CD14-positive monocyte (primary cell): ENCODE measurements at regions of chr5 and their contacts with region 1.

Region 1: DNA sequence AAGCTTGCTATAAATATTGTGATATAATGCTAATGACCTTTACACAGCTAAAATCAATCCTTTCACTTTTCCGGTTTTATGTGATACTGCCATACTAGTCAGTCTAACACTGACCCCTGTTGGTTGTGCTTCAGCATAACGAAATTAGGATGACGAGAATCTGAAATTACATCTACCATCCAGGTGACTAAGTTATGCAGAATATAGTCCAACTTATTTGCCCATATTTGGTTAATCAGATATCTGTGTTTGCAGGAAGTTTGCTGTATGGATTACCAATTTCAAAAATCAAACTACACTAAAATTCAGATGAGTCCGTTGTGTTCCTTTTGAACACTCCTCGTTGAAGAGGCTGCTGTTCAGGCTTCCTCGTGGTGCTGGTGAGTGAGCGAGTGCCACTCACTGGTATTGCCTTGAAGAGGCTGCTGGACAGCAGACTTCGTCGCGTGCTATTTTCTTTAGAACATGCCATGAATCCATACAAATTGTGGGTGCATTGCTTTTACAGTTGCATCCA is 32.5 kb downstream of the TENT4A start:
- DNase-seq: peak; percentile 36 to 60 (median 52)
- H3K4me3 ChIP-seq: no peak overlapping the region
- H3K4me3 Mint-ChIP-seq: no peak overlapping the region
- H3K27ac ChIP-seq: no peak overlapping the region
- H3K27ac Mint-ChIP-seq: peak overlapping the region in 1 of 7 donors; percentile 26
- H3K4me1 ChIP-seq: no peaks in the 10 kb centered on the region
- H3K4me1 Mint-ChIP-seq: no peaks in the 10 kb centered on the region
- H3K27me3 ChIP-seq: no peaks in the 10 kb centered on the region
- H3K27me3 Mint-ChIP-seq: peaks cover 0 to 2% (median 0%) of the 10 kb centered on the region in 3 donors
- CTCF ChIP-seq: peak; percentile 90

Region 2: DNA sequence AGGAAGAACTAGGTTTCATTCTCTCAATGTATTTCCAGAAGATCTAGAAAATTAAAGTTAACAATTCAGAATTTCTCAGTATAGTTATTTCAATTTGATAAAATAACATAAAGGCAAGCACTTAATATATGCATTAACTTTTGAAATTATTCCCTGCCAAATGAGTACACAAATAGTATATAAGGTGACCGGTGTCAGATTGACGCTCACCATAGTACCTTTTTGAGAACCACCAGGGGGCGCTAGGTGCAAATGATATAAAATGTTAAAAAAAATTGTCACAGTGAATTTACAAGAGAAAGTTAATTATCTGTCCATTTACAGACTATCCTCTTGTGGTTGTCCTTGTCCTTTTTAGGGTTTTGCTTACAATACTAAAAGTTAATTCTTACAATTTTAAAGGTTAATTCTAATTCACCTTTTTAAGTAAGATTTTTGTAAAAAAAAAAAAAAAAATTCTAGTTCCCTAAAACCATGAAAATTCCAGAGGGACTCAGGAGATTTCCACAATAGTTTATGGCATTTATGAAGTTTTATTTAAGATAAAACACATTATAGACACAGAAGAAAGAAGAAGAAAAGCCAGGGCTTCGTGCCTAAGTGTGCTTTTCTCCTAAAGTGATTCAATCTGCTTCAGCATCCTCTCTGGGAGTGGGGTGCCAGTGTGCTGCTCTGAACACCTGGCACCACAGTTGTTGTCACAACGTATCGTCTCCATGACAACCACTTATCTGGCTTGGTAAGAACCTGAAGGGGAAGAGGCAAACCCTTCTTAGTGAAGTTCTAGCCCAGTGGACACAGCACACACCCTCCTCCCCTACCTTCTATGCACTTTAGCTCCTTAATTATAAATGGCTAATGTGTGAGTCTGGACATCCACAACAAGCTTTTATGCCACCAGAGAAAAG is 1603.9 kb before region 1 on chr5:
- intact Hi-C with region 1: loop called in 1 of 2 experiments (anchors 10 kb)
- DNase-seq: peak; percentile 7 to 33 (median 23)
- H3K4me3 ChIP-seq: no peak overlapping the region
- H3K4me3 Mint-ChIP-seq: peak overlapping the region in 1 of 2 donors; percentile 83
- H3K27ac ChIP-seq: no peak overlapping the region
- H3K27ac Mint-ChIP-seq: no peak overlapping the region
- H3K4me1 ChIP-seq: no peaks in the 10 kb centered on the region
- H3K4me1 Mint-ChIP-seq: no peaks in the 10 kb centered on the region
- H3K27me3 ChIP-seq: peaks cover 10 to 22% of the 10 kb centered on the region in 2 donors
- H3K27me3 Mint-ChIP-seq: peaks cover 18 to 30% (median 20%) of the 10 kb centered on the region in 3 donors
- CTCF ChIP-seq: peak; percentile 87

Region 3: DNA sequence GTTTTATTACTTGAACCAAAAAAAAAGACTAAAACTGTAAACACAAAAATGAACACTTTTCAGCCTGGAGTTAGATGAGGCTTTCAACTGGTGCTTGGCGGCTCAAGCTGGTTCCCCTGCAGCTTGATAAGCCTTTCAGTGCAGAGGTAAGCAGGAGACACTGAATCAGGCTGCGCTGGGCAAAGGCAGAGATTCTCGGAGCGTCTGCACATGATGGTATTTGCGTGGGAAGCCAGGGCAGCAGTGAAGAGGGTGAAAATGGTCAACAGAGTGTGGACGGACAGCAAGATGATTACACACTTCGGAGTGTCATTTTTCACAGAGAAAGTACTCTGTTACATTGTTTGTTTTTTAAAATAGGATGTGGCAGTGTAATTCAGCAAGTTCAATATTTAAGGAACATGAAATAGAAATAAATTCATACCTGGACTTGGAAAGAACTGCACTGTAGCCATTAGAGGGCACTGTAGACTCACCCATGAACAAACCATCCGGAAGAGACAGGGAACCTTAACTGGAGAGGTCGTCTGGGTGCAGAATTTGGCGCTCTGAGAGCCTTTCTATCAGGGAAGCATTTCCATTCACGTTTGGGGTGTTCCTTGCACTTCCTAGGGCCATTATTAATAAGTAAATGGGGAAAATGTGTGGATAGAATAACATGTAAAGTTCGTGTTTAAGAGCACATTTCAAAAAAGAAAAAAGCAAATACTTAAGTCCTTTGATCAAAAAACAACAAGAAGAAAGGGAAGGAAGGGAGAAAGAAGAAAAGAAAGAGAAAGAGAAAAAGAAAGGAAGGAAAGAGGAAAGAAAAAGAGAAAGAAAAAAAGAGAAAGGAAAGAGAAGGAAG is 1253.5 kb before region 1 on chr5:
- intact Hi-C with region 1: loop called in 1 of 2 experiments (anchors 10 kb)
- DNase-seq: peak; percentile 17 to 21 (median 21)
- H3K4me3 ChIP-seq: no peak overlapping the region
- H3K4me3 Mint-ChIP-seq: peak overlapping the region; percentile 37 to 64
- H3K27ac ChIP-seq: no peak overlapping the region
- H3K27ac Mint-ChIP-seq: peak overlapping the region in 2 of 7 donors; percentile 27 to 68
- H3K4me1 ChIP-seq: peaks cover 4 to 17% of the 10 kb centered on the region in 2 donors
- H3K4me1 Mint-ChIP-seq: peaks cover 14% of the 10 kb centered on the region
- H3K27me3 ChIP-seq: peaks cover 2 to 26% of the 10 kb centered on the region in 2 donors
- H3K27me3 Mint-ChIP-seq: peaks cover 19 to 29% (median 23%) of the 10 kb centered on the region in 3 donors
- CTCF ChIP-seq: peak; percentile 62

Region 4: DNA sequence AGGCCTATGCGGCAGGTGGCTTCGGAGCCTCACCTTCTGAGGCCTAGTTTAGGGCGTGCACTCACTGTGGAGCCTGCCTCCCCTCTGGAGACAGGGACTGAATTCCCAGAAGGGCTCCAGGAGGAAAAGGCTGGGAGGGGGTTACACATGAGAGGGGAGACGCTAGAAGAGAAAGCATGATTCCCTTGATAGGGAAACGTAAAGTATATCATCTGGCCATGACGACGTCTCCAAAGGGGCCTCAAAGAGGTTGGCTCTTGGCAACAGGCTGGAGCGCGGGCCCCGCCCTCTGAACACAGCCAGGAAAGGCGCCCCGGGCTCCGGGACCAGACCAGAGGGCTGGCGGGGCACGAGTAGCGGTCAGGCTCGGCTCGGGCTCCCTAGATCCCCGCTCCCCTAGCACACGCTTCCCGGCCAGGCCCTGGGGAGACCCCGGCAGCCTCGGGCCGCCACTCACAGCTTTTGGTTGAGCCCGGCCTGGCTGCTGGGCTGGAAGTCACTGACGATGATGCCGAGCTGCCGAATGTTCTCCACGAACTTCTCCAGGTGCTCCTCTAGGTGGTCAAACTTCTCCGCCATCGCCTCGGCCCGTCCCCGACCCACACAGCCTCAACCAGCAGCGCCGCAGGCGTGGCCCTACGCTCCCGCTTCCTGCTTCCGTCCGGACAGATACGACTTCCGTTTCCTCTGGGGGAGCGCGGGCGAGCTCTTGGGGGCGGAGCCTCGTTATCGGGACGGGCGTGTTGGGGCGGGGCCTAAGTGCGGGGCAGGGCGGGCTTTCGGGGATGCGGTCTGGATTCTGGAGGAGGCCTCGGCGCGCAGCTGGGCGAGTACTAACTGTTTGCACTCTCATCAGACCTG is 367.6 kb before region 1 on chr5 and contains the start of gene MED10:
- intact Hi-C with region 1: loop called in 1 of 2 experiments (anchors 10 kb)
- DNase-seq: peak; percentile 83 to 86 (median 86)
- H3K4me3 ChIP-seq: peak within 1 kb of the TSS; percentile 79 to 98 (median 93)
- H3K4me3 Mint-ChIP-seq: peak within 1 kb of the TSS; percentile 99 to 100
- H3K27ac ChIP-seq: peak within 1 kb of the TSS; percentile 66 to 86
- H3K27ac Mint-ChIP-seq: peak within 1 kb of the TSS; percentile 89 to 97 (median 95)
- H3K4me1 ChIP-seq: peaks cover 15 to 21% of the 10 kb centered on the region in 2 donors
- H3K4me1 Mint-ChIP-seq: peaks cover 24% of the 10 kb centered on the region
- H3K27me3 ChIP-seq: peaks cover 4 to 7% of the 10 kb centered on the region in 2 donors
- H3K27me3 Mint-ChIP-seq: peaks cover 6 to 13% (median 12%) of the 10 kb centered on the region in 3 donors
- CTCF ChIP-seq: no peak
- polyA plus RNA-seq, gene MED10: 27.6 to 47.8 (median 47.3) TPM

Region 5: GRCh38 chr5:6692906-6693305 is 52.9 kb before region 1 on chr5:
- intact Hi-C with region 1: no loop called
- DNase-seq: peak in 1 of 3 donors; percentile 49
- H3K4me3 ChIP-seq: no peak overlapping the region
- H3K4me3 Mint-ChIP-seq: no peak overlapping the region
- H3K27ac ChIP-seq: no peak overlapping the region
- H3K27ac Mint-ChIP-seq: no peak overlapping the region
- H3K4me1 ChIP-seq: no peaks in the 10 kb centered on the region
- H3K4me1 Mint-ChIP-seq: no peaks in the 10 kb centered on the region
- H3K27me3 ChIP-seq: peaks cover 4 to 32% of the 10 kb centered on the region in 2 donors
- H3K27me3 Mint-ChIP-seq: peaks cover 23 to 45% (median 24%) of the 10 kb centered on the region in 3 donors
- CTCF ChIP-seq: no peak